ENCODE measurements at regions of chr1 and their contacts with region 1.

Region 1: DNA sequence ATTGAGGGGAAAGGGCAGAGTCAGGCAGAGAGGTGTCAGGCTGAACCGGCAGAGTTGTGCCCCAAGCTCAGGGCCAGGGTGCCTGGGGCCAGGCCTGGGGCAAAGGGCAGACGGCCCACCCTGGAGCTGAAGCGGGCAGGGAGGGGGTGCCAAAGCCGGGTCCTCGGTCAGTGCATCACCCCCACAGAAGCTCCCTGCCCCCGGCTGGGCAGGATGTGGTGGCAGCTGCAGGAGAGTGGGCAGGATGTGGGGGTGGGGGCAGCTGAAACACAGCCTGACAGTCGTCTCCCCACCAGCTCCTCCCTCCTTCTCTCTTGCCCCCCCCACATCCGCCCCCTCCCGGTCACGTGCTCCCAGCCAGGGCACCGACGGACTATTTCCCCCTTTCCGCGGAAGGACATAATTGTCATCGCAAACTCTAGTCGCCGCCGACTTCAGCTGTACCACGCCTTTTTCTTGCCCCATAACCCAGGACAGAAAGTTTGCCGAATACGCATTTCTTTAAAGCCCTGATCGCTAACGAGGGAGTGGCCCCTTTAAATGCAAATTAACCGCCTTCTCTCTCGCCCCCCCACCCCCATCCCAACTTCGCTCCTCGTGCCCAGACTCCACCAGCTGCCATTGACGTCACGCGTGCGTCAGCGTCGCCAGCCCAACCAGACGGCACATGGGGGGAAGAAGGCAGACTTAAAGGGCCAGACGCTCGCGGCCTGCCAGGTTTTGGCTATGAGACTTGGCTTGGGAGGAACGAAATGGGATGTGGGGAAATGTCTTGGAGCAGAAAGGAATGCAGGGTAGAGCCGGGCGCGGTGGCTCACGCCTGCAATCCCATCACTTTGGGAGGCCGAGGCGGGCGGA is 4.5 kb upstream of the MEF2D start:
- DNase-seq: peak; percentile 100
- ATAC-seq: peak; percentile 64

Region 2: GRCh38 chr1:156456622-156457465 is 48.2 kb before region 1 on chr1:
- intact Hi-C with region 1: loop called (anchors 2 kb)
- DNase-seq: peak; percentile 98
- ATAC-seq: peak; percentile 94

Region 3: GRCh38 chr1:156471496-156472490 is 33.3 kb before region 1 on chr1:
- intact Hi-C with region 1: no loop called
- DNase-seq: peak; percentile 92
- ATAC-seq: peak; percentile 85

Measured in Right ventricle myocardium superior (tissue), 1 donor.